Lower lobe of right lung (tissue), 2 donors: ENCODE measurements at regions of chr11 and their contacts with region 1.

Region 1: GRCh38 chr11:111601979-111602864 is at the start of gene SIK2:
- DNase-seq: peak; percentile 95
- ATAC-seq: peak; percentile 96 to 97
- H3K4me3 ChIP-seq: peak within 1 kb of the TSS; percentile 87
- H3K27ac ChIP-seq: peak within 1 kb of the TSS; percentile 99
- H3K4me1 ChIP-seq: peaks cover 42% of the 10 kb centered on the region
- H3K27me3 ChIP-seq: no peaks in the 10 kb centered on the region
- CTCF ChIP-seq: peak; percentile 86
- total RNA-seq, gene SIK2: 26.3 TPM

Region 2: DNA sequence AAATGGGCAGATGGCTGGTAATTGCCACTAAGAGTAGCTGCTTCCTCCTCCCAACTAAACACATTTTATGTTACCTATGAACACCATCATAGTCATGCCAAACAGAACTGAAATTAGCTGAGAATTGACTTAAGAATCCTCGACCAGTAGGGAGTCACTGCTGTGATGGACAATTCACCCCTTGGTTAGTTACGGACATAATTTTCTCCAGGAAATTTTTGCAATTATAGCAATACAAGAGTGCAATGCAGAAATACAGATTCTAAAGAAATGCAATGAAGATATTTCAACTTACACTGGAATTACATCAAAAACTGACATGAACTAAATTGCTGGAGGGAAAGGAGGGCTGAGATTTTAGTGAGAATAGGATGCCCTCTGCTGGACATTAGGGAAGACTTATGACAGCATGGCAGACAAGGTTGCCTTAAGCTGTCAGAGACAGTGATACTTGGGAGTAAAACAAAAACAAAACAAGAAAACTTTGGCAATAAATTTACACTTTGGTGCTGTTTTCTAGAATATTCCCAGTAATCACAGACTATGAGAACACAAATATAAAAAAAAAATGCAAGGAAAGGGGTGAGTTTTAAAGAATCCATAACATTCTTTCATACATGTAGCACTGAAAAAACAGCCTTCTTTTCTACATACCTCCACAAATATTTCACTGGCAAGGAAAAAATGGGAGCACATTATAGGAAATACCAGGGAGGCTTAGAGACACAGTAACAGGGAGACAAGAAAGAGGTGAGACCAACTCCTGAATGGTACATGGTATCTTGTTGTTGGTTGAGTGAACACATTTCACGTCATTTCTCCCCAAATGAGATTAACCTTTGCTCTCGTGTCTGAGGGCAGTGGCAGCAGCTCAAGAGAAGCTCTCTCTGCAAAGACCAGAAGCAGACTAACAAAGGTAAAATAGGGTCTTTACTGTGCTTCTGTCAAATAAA is 175.1 kb after region 1 on chr11:
- intact Hi-C with region 1: loop called (anchors 5 kb)
- DNase-seq: no peak
- ATAC-seq: peak; percentile 86 to 89
- H3K4me3 ChIP-seq: no peak overlapping the region
- H3K27ac ChIP-seq: no peak overlapping the region
- H3K4me1 ChIP-seq: peaks cover 21% of the 10 kb centered on the region
- H3K27me3 ChIP-seq: no peaks in the 10 kb centered on the region
- CTCF ChIP-seq: peak; percentile 81

Region 3: GRCh38 chr11:111814557-111815320 is 212.5 kb after region 1 on chr11:
- intact Hi-C with region 1: no loop called
- DNase-seq: no peak
- ATAC-seq: peak in 1 of 2 donors; percentile 77
- H3K4me3 ChIP-seq: no peak overlapping the region
- H3K27ac ChIP-seq: no peak overlapping the region
- H3K4me1 ChIP-seq: peaks cover 11% of the 10 kb centered on the region
- H3K27me3 ChIP-seq: no peaks in the 10 kb centered on the region
- CTCF ChIP-seq: no peak

Region 4: DNA sequence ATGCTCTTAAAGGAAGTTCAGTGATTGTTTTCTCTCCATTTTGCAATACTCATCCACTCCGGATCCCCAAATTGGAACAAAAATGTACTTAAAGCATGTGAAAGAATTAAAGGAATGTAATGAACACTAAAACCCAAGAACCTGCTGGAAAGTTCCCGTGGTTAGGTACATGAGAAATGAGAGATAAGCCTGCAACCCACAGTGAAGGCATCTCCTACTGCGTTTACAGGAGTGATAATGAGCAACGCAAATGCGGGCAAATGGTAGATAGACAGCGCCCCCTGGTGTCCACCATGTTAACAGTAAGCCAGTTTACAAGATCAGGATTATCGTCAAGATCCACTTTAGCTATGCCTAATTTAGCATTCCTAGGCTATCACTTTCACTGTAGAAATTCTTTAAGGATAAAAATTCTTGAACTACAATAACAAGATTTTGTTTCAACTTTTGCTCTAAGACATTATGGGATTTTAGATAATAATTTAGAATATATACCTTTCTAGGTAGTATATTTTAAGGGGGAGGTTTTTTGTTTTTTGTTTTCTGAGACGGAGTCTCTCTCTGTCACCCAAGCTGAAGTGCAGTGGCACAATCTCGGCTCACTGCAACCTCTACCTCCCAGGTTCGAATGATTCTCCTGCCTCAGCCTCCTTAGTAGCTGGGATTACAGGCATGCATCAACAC is 239.3 kb after region 1 on chr11:
- intact Hi-C with region 1: loop called (anchors 10 kb)
- DNase-seq: peak; percentile 90
- ATAC-seq: peak; percentile 92 to 96
- H3K4me3 ChIP-seq: no peak overlapping the region
- H3K27ac ChIP-seq: peak overlapping the region; percentile 44
- H3K4me1 ChIP-seq: peaks cover 20% of the 10 kb centered on the region
- H3K27me3 ChIP-seq: no peaks in the 10 kb centered on the region
- CTCF ChIP-seq: peak; percentile 89